ENCODE measurements at regions of chr1 and their contacts with region 1.

Region 1: GRCh38 chr1:225777583-225778336 is at the start of gene SRP9:
- DNase-seq: peak; percentile 95 to 100 (median 99)
- ATAC-seq: peak; percentile 92
- H3K4me3 Mint-ChIP-seq: no peak within 1 kb of the TSS
- H3K27ac Mint-ChIP-seq: no peak within 1 kb of the TSS
- H3K4me1 Mint-ChIP-seq: peaks cover 23 to 58% (median 49%) of the 10 kb centered on the region in 4 donors
- H3K27me3 Mint-ChIP-seq: no peaks in the 10 kb centered on the region
- polyA plus RNA-seq, gene SRP9: 273 to 350 (median 288) TPM

Region 2: DNA sequence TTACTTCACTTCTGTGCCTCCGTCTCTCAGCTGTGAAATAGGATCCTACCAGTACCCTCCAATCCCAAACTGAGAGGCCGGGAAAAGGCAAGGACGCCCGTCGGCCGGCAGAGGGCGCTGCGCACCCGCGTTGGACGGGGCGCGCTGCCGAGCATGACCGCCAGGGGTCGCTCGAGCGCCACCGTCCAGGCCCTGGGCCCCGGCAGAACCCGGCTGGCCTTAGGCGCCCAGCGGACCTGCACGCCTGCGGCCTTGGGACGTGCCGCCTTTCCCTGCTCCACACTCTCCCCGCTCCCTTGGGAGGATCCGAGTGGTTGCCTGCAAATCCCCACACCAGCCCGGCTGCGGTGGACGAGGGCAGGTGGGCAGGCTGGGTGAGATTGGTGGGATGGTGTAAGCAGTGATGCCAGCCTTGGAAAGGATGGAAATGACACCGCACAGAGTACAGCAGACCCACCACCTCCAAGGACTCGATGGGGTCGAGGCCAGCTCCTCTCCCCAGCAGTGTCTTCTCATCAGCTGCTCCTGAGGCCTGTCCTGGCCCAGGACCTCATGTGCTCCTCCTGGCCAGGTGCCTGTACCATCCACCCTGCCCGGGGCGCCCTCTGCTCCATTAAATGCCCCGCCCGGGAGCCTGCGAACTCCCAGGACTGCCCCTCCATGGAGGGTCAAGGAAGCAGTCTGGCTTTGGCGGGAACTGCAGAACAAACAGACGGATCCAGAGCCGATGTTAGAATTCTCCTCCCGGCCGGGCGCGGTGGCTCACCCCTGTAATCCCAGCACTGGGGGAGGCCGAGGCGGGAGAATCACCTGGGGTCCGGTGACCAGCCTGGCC is 302.6 kb before region 1 on chr1:
- POLR2A ChIA-PET with region 1: interaction called, 33 read pairs
- DNase-seq: peak; percentile 45 to 87 (median 74)
- ATAC-seq: peak; percentile 57 to 78
- H3K4me3 Mint-ChIP-seq: peak overlapping the region in 1 of 10 donors; percentile 45
- H3K27ac Mint-ChIP-seq: peak overlapping the region in 5 of 10 donors; percentile 58 to 83 (median 73)
- H3K4me1 Mint-ChIP-seq: peaks cover 26 to 64% (median 56%) of the 10 kb centered on the region in 4 donors
- H3K27me3 Mint-ChIP-seq: no peaks in the 10 kb centered on the region

Region 3: DNA sequence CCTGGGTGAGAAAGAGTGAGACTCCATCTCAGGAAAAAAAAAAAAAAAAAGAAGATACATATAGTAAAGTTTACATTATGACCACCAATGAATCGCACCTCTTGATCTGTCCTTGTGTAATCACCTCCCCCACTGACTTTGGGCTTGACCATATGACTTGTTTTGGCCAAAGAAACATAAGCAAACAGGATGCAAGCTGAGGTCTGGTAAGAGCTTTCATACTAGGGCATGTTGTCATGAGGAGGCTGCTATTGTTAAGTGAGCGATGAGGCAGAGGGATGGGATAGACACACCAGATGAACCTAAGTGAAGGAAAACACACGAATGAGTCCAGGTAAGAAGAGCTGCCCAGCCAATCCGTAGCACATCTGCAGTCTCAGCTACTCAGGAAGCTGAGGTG is 135.6 kb before region 1 on chr1:
- POLR2A ChIA-PET with region 1: no interaction called
- DNase-seq: no peak
- ATAC-seq: no peak
- H3K4me3 Mint-ChIP-seq: no peak overlapping the region
- H3K27ac Mint-ChIP-seq: no peak overlapping the region
- H3K4me1 Mint-ChIP-seq: no peaks in the 10 kb centered on the region
- H3K27me3 Mint-ChIP-seq: peaks cover 0 to 18% (median 10%) of the 10 kb centered on the region in 5 donors

Region 4: GRCh38 chr1:225809842-225810578 is 32.2 kb after region 1 on chr1 and contains the start of gene EPHX1:
- POLR2A ChIA-PET with region 1: interaction called, 45 read pairs
- DNase-seq: peak; percentile 30 to 73 (median 56)
- ATAC-seq: peak; percentile 90 to 93
- H3K4me3 Mint-ChIP-seq: peak within 1 kb of the TSS; percentile 79 to 92 (median 86)
- H3K27ac Mint-ChIP-seq: peak within 1 kb of the TSS in 9 of 10 donors; percentile 46 to 88 (median 71)
- H3K4me1 Mint-ChIP-seq: peaks cover 3 to 24% (median 11%) of the 10 kb centered on the region in 4 donors
- H3K27me3 Mint-ChIP-seq: peaks cover 0 to 2% (median 0%) of the 10 kb centered on the region in 5 donors
- polyA plus RNA-seq, gene EPHX1: 1.6 to 2.8 (median 2.0) TPM

Region 5: DNA sequence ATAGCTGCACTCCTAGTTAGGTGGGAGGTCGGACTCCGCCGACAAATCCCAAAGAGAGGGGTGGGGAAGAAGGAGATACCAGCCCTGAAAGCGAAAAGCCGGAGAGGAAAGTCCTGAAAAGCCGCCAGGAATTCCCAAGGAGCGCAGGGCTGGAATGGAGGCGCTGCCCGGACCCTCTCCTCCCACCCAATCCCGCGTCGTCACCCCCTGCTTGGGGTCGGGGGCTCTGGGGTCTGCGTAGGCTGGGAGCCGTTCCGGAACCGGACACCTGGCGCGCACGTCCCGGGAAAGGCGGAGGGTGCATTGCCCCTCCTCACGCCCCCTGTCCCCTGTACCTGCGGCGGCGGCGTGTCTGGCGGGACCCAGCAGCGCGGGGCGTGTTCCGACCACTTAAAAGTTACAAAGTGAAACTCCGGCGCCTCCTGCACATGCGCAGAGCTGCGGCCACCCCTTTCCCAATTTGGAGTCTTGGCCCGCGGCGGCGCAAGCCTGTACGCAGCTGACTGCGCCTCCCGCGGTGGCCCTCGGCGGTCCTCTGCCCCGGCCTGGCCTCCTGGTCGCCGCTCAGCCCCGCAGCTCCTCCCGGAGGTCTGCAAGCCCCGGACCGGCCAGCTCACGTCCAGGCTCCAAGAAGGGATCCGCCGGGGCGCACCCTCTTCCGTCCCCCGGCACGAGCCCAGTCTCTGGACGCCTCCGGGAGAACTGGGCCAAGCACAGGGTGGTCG is 104.4 kb after region 1 on chr1 and contains the start of gene TMEM63A:
- POLR2A ChIA-PET with region 1: interaction called, 101 read pairs
- DNase-seq: peak; percentile 83 to 95 (median 88)
- ATAC-seq: peak; percentile 71 to 76
- H3K4me3 Mint-ChIP-seq: peak within 1 kb of the TSS; percentile 87 to 99 (median 94)
- H3K27ac Mint-ChIP-seq: peak within 1 kb of the TSS; percentile 87 to 98 (median 94)
- H3K4me1 Mint-ChIP-seq: peaks cover 28 to 55% (median 49%) of the 10 kb centered on the region in 4 donors
- H3K27me3 Mint-ChIP-seq: no peaks in the 10 kb centered on the region
- polyA plus RNA-seq, gene TMEM63A: 34.4 to 53.5 (median 45.1) TPM

Region 6: DNA sequence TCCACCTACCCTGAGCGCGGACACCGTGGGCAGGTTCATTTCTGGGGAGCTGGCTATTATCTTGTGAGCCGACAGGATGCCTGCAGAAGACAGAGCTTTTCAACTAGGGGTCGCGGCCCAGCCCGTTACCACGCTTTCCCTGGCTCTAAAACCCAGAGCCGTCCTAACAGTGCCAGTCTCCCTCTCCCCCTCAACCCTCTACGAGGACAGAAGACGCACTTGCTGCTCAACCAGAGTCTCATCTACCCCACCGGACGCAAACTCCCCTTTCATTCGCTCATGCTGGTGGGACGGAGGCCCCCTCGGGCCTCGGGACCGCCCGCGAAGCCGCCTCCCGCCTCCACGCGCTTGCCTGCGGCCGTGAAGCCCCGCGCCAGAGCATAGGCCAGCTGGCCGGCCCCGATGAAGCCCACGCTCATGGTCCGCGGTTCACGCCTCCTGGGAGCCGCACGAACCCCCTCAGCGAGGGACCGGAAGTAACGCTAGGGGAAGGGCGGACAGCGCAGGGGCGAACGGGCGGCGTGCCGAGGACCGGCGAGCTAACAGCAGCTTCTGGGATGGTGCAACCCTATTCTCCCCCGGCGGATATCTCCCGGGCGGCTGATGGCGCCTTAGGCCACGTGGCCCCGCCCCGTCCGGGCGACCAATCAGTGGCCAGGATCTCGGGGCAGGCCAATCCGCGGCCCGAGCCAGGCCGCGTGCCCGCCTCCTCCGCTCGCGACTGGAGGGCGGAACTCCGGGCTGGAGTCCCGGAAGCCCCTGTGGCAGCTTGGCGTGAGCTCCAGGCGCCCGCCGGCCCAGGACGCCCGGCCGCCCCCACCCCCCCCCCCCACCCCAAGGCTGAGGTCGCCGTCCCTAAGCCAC is 146.2 kb after region 1 on chr1 and contains the start of gene PYCR2:
- POLR2A ChIA-PET with region 1: interaction called, 19 read pairs
- DNase-seq: peak; percentile 89 to 95 (median 94)
- ATAC-seq: peak; percentile 95 to 96
- H3K4me3 Mint-ChIP-seq: peak within 1 kb of the TSS; percentile 92 to 98 (median 96)
- H3K27ac Mint-ChIP-seq: peak within 1 kb of the TSS; percentile 91 to 98 (median 96)
- H3K4me1 Mint-ChIP-seq: peaks cover 31 to 72% (median 66%) of the 10 kb centered on the region in 4 donors
- H3K27me3 Mint-ChIP-seq: no peaks in the 10 kb centered on the region
- polyA plus RNA-seq, gene PYCR2: 75.0 to 152 (median 121) TPM